MCF 10A (cell line): ENCODE measurements at regions of chr11 and their contacts with region 1.

Region 1: GRCh38 chr11:61639816-61640443 is 40.3 kb upstream of the DAGLA start:
- DNase-seq: no peak
- H3K4me3 Mint-ChIP-seq: no peak overlapping the region
- H3K27ac Mint-ChIP-seq: no peak overlapping the region
- H3K4me1 Mint-ChIP-seq: no peaks in the 10 kb centered on the region
- H3K27me3 Mint-ChIP-seq: peaks cover 27% of the 10 kb centered on the region
- CTCF ChIP-seq: no peak

Region 2: DNA sequence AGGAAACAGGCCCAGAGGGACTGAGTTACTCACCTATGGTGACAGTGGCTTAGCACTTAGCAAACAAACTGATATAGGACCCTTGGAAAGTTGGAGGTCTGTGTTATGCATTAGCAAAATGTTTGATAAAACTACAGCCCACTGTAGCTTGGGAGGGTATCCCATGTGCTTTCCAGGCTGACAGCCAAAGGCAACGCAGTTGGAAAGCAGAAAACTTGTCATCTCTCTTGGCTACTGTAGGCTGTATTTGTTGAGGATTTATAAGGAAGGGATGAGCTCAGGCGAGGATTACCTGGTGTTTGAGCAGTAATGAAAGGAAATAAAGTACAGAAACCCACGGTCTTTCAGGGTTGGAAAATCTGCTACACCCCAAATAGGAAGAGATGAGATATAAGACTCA is 186.2 kb before region 1 on chr11:
- CTCF ChIA-PET with region 1: interaction called, 161 read pairs
- POLR2A ChIA-PET with region 1: no interaction called
- intact Hi-C with region 1: no loop called
- DNase-seq: no peak
- H3K4me3 Mint-ChIP-seq: no peak overlapping the region
- H3K27ac Mint-ChIP-seq: no peak overlapping the region
- H3K4me1 Mint-ChIP-seq: no peaks in the 10 kb centered on the region
- H3K27me3 Mint-ChIP-seq: no peaks in the 10 kb centered on the region
- CTCF ChIP-seq: no peak

Region 3: GRCh38 chr11:61650781-61651571 is 11.0 kb after region 1 on chr11:
- CTCF ChIA-PET with region 1: interaction called, 36 read pairs
- POLR2A ChIA-PET with region 1: interaction called, 3 read pairs
- intact Hi-C with region 1: no loop called
- DNase-seq: no peak
- H3K4me3 Mint-ChIP-seq: no peak overlapping the region
- H3K27ac Mint-ChIP-seq: no peak overlapping the region
- H3K4me1 Mint-ChIP-seq: no peaks in the 10 kb centered on the region
- H3K27me3 Mint-ChIP-seq: peaks cover 39% of the 10 kb centered on the region
- CTCF ChIP-seq: no peak